Caco-2 (cell line): ENCODE measurements at regions of chrX and their contacts with region 1.

Region 1: DNA sequence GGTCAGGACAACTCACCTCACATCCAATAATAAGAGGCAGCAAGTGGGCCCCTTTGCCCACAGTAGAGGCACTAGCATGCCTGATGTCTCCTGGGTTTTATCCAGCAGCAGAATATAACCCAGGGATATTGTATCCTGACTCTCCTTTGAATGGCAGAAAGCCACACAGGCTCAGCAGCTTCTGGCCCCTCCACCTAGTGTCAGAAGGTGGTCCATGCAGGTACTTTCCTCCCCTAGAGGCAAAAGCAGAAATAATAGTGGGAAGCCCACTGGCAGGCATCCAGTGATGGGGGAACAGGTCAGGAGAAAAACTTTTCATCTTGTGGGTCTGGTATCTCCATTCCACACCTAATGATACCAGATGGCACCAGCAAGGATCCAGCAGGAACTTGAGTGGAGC is 75.5 kb upstream of the IRS4 start:
- DNase-seq: peak in 1 of 2 experiments; percentile 3
- H3K4me3 ChIP-seq: no peak overlapping the region
- H3K4me3 Mint-ChIP-seq: no peak overlapping the region
- H3K27ac Mint-ChIP-seq: no peak overlapping the region
- H3K4me1 ChIP-seq: no peaks in the 10 kb centered on the region
- H3K4me1 Mint-ChIP-seq: no peaks in the 10 kb centered on the region
- H3K27me3 ChIP-seq: no peaks in the 10 kb centered on the region
- H3K27me3 Mint-ChIP-seq: no peaks in the 10 kb centered on the region
- CTCF ChIP-seq: peak in 1 of 2 experiments; percentile 36

Region 2: GRCh38 chrX:108699368-108699767 is 112.5 kb before region 1 on chrX:
- CTCF ChIA-PET with region 1: no interaction called
- POLR2A ChIA-PET with region 1: no interaction called
- intact Hi-C with region 1: loop called (anchors 1 kb)
- DNase-seq: peak in 1 of 2 experiments; percentile 7
- H3K4me3 ChIP-seq: no peak overlapping the region
- H3K4me3 Mint-ChIP-seq: no peak overlapping the region
- H3K27ac Mint-ChIP-seq: no peak overlapping the region
- H3K4me1 ChIP-seq: no peaks in the 10 kb centered on the region
- H3K4me1 Mint-ChIP-seq: no peaks in the 10 kb centered on the region
- H3K27me3 ChIP-seq: no peaks in the 10 kb centered on the region
- H3K27me3 Mint-ChIP-seq: no peaks in the 10 kb centered on the region
- CTCF ChIP-seq: no peak

Region 3: DNA sequence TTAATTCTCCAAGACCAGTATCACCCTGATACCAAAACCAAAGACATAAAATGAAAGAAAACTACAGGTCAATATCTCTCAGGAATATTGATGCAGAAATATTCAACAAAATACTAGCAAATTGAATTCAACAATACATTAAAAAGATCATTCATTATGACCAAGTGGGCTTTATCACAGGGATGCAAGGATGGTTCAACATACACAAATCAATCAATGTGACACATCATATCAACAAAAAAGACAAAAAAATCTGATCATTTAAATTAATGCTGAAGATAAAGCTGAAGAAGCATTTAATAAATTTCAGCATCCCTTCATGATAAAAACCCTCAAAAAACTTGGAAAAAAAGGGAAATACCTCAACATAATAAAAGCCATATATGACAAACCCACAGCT is 328.6 kb after region 1 on chrX:
- CTCF ChIA-PET with region 1: no interaction called
- POLR2A ChIA-PET with region 1: no interaction called
- intact Hi-C with region 1: no loop called
- DNase-seq: no peak
- H3K4me3 ChIP-seq: no peak overlapping the region
- H3K4me3 Mint-ChIP-seq: no peak overlapping the region
- H3K27ac Mint-ChIP-seq: no peak overlapping the region
- H3K4me1 ChIP-seq: no peaks in the 10 kb centered on the region
- H3K4me1 Mint-ChIP-seq: no peaks in the 10 kb centered on the region
- H3K27me3 ChIP-seq: no peaks in the 10 kb centered on the region
- H3K27me3 Mint-ChIP-seq: no peaks in the 10 kb centered on the region
- CTCF ChIP-seq: no peak